ENCODE measurements at regions of chr6 and their contacts with region 1.

Region 1: GRCh38 chr6:43667245-43668150 is 20.1 kb downstream of the MRPS18A start:
- DNase-seq: peak; percentile 73 to 91 (median 88)
- H3K4me3 ChIP-seq: no peak overlapping the region
- H3K27ac ChIP-seq: peak overlapping the region; percentile 0 to 16
- H3K4me1 ChIP-seq: peaks cover 9% of the 10 kb centered on the region
- H3K27me3 ChIP-seq: no peaks in the 10 kb centered on the region
- CTCF ChIP-seq: peak; percentile 83 to 95 (median 94)
- EP300 ChIP-seq: no peak
- POLR2A ChIP-seq: peak; percentile 21

Region 2: GRCh38 chr6:43159599-43159998 is 507.9 kb before region 1 on chr6:
- intact Hi-C with region 1: no loop called
- DNase-seq: no peak
- H3K4me3 ChIP-seq: no peak overlapping the region
- H3K27ac ChIP-seq: no peak overlapping the region
- H3K4me1 ChIP-seq: no peaks in the 10 kb centered on the region
- H3K27me3 ChIP-seq: no peaks in the 10 kb centered on the region
- CTCF ChIP-seq: no peak
- EP300 ChIP-seq: no peak
- POLR2A ChIP-seq: no peak

Region 3: GRCh38 chr6:43391440-43392031 is 276.0 kb before region 1 on chr6:
- intact Hi-C with region 1: no loop called
- DNase-seq: no peak
- H3K4me3 ChIP-seq: no peak overlapping the region
- H3K27ac ChIP-seq: no peak overlapping the region
- H3K4me1 ChIP-seq: no peaks in the 10 kb centered on the region
- H3K27me3 ChIP-seq: no peaks in the 10 kb centered on the region
- CTCF ChIP-seq: no peak
- EP300 ChIP-seq: no peak
- POLR2A ChIP-seq: no peak

Region 4: DNA sequence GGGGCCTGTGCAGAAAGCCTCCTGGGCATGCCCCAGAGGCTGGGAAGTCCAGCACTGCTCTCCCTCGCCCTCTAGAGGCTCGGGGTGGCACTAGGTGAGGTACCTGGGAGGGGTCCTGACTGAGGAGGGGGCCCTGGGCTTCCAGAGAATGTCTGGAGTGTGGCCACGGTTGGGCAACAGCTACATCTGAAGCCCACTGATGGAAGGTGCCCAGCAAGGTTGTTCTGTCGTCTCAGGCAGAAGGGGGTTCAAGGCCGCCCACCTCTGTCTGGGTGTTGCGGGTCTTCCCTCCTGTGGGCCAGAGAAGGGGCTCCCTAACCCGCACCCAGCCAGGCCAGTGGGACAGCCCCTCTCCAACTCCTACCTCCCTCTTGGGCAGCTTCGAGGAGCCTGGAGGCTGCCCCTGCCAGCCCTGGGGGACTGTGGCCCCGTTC is 91.1 kb after region 1 on chr6:
- intact Hi-C with region 1: loop called in 2 of 4 experiments (anchors 5 to 10 kb)
- DNase-seq: no peak
- H3K4me3 ChIP-seq: no peak overlapping the region
- H3K27ac ChIP-seq: no peak overlapping the region
- H3K4me1 ChIP-seq: peaks cover 2% of the 10 kb centered on the region
- H3K27me3 ChIP-seq: no peaks in the 10 kb centered on the region
- CTCF ChIP-seq: peak in 1 of 3 donors; percentile 14
- EP300 ChIP-seq: no peak
- POLR2A ChIP-seq: no peak

Region 5: DNA sequence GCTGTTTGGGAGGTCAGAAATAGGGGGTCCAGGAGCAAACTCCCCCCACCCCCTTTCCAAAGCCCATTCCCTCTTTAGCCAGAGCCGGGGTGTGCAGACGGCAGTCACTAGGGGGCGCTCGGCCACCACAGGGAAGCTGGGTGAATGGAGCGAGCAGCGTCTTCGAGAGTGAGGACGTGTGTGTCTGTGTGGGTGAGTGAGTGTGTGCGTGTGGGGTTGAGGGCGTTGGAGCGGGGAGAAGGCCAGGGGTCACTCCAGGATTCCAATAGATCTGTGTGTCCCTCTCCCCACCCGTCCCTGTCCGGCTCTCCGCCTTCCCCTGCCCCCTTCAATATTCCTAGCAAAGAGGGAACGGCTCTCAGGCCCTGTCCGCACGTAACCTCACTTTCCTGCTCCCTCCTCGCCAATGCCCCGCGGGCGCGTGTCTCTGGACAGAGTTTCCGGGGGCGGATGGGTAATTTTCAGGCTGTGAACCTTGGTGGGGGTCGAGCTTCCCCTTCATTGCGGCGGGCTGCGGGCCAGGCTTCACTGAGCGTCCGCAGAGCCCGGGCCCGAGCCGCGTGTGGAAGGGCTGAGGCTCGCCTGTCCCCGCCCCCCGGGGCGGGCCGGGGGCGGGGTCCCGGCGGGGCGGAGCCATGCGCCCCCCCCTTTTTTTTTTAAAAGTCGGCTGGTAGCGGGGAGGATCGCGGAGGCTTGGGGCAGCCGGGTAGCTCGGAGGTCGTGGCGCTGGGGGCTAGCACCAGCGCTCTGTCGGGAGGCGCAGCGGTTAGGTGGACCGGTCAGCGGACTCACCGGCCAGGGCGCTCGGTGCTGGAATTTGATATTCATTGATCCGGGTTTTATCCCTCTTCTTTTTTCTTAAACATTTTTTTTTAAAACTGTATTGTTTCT is 102.3 kb after region 1 on chr6 and contains the start of gene VEGFA:
- intact Hi-C with region 1: loop called (anchors 2 to 10 kb)
- DNase-seq: peak; percentile 86 to 94 (median 91)
- H3K4me3 ChIP-seq: peak within 1 kb of the TSS; percentile 78
- H3K27ac ChIP-seq: peak within 1 kb of the TSS; percentile 74 to 76
- H3K4me1 ChIP-seq: peaks cover 14% of the 10 kb centered on the region
- H3K27me3 ChIP-seq: no peaks in the 10 kb centered on the region
- CTCF ChIP-seq: peak; percentile 84 to 91 (median 90)
- EP300 ChIP-seq: no peak
- POLR2A ChIP-seq: peak; percentile 61
- total RNA-seq, gene VEGFA: 19.2 to 123 (median 45.2) TPM

Region 6: DNA sequence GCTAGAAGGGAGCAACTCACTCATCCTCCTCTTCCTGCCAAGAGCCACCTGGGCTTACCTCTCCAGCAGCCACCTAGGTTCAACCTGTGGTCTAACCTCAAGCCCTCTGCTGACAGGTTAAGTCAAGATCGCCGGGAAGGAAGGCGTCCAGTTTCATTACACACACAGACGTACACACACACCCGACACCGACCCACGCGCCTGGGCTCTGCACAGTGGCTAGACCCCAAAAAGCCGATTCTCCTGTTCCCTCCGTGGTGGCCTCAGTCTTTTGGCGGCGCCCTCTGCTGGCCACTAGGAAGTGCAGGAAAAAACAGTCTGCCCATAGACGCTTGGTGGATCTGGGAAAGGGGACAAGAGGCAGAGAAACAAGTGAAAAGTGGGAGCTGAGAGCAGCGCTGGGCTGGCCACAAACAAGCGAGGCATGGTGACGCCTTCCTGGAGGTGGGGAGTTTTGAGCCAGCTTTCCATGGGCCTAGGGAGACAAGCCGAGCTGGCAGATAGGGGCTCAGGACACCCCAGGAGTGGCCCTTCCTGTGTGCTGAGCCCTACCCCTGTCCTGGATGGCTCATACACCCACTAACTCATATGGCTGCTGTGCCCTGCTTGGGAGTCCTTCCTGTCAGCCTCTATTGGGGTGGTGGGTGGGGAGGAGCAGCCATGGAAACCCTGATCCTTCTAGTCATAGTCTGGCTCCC is 407.1 kb after region 1 on chr6:
- intact Hi-C with region 1: loop called (anchors 2 to 5 kb)
- DNase-seq: peak; percentile 60 to 81 (median 72)
- H3K4me3 ChIP-seq: no peak overlapping the region
- H3K27ac ChIP-seq: peak overlapping the region; percentile 19 to 56
- H3K4me1 ChIP-seq: peaks cover 11% of the 10 kb centered on the region
- H3K27me3 ChIP-seq: no peaks in the 10 kb centered on the region
- CTCF ChIP-seq: peak; percentile 77 to 89 (median 77)
- EP300 ChIP-seq: no peak
- POLR2A ChIP-seq: no peak

Measured in ovary (tissue), 10 donors.